A673 (cell line): ENCODE measurements at regions of chr10 and their contacts with region 1.

Region 1: GRCh38 chr10:17179002-17179401 is 22.5 kb downstream of the TRDMT1 start:
- DNase-seq: no peak
- H3K4me3 ChIP-seq: no peak overlapping the region
- H3K27ac ChIP-seq: no peak overlapping the region
- H3K4me1 ChIP-seq: no peaks in the 10 kb centered on the region
- H3K27me3 ChIP-seq: no peaks in the 10 kb centered on the region
- CTCF ChIP-seq: no peak

Region 2: GRCh38 chr10:17151716-17152115 is 27.3 kb before region 1 on chr10:
- CTCF ChIA-PET with region 1: no interaction called
- POLR2A ChIA-PET with region 1: interaction called, 12 read pairs
- intact Hi-C with region 1: no loop called
- DNase-seq: no peak
- H3K4me3 ChIP-seq: no peak overlapping the region
- H3K27ac ChIP-seq: no peak overlapping the region
- H3K4me1 ChIP-seq: peaks cover 4% of the 10 kb centered on the region
- H3K27me3 ChIP-seq: no peaks in the 10 kb centered on the region
- CTCF ChIP-seq: no peak

Region 3: GRCh38 chr10:17387861-17388508 is 209.0 kb after region 1 on chr10:
- CTCF ChIA-PET with region 1: no interaction called
- POLR2A ChIA-PET with region 1: no interaction called
- intact Hi-C with region 1: no loop called
- DNase-seq: no peak
- H3K4me3 ChIP-seq: no peak overlapping the region
- H3K27ac ChIP-seq: no peak overlapping the region
- H3K4me1 ChIP-seq: no peaks in the 10 kb centered on the region
- H3K27me3 ChIP-seq: no peaks in the 10 kb centered on the region
- CTCF ChIP-seq: no peak

Region 4: DNA sequence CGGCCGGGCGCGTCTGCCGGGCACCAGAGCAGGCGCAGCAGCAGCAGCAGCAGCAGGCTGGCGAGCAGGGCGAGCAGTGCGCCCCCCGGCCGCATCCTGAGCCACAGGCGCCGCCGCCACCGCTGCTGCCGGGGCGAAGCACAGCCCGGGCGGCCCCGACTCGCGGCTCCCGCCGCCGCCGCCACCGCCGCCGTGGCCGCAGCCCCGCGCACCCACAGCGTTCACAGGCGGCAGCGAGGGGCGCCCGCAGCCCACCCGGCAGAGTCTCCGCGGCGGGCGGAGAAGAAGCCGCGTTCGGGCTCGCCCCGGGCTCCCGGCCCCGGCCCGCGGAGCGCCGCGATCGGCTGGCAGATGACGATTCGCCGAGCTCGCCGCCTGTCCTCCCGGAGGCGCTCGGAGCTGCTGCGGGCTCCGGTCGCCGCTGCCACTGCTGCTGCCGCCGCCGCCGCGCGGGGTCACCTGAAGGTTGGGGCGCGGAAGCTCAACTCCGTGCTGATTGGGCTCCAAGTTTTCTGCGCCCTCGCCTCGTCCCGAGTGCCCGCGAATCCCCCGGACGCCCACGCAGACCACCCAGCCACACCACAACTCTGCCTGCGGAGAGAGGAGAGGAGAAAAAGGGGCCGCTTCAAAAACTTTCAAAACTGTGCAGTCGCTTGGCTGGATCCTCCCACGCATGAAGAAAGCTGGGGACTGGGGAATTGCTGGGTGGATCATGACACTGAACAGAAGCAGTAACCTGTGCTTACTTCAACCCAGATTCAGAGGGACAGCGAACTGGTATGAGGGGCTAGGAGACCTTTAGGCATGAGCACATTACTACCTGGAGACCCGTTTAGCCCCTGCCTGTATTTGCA is 275.4 kb after region 1 on chr10 and contains the start of gene ST8SIA6:
- CTCF ChIA-PET with region 1: no interaction called
- POLR2A ChIA-PET with region 1: no interaction called
- intact Hi-C with region 1: no loop called
- DNase-seq: peak; percentile 38
- H3K4me3 ChIP-seq: peak within 1 kb of the TSS; percentile 44
- H3K27ac ChIP-seq: no peak within 1 kb of the TSS
- H3K4me1 ChIP-seq: no peaks in the 10 kb centered on the region
- H3K27me3 ChIP-seq: peaks cover 50% of the 10 kb centered on the region
- CTCF ChIP-seq: no peak
- total RNA-seq, gene ST8SIA6: not detected in 2 replicates